GM13977 (cell line): ENCODE measurements at regions of chr13 and their contacts with region 1.

Region 1: DNA sequence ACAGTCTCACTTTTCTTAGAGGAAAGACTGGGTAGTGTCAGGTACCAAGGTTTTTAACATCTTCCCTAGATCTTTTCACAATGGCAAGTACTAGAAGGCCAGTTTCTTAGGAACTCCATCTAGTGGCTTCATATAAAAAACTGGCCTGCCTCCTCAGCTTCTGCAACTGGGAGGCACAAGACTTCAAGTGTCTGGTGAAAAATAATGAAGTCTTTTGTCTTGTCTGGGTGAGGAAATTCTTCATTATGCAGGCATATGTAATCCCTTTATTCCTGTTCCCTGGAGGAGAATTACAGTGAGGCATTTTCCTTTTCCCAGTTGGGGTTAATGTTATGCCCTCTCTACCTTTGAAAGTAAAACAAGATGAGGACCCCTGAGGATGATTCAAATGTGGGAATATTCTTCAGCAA is 300.5 kb downstream of the NALCN start:
- DNase-seq: no peak
- CTCF ChIP-seq: no peak

Region 2: GRCh38 chr13:100588331-100589177 is 527.2 kb before region 1 on chr13 and contains the start of gene GGACT:
- in situ Hi-C with region 1: loop called (anchors 25 kb)
- DNase-seq: peak; percentile 94
- CTCF ChIP-seq: peak; percentile 95

Region 3: GRCh38 chr13:101499406-101499805 is 383.6 kb after region 1 on chr13:
- in situ Hi-C with region 1: no loop called
- DNase-seq: no peak
- CTCF ChIP-seq: no peak

Region 4: DNA sequence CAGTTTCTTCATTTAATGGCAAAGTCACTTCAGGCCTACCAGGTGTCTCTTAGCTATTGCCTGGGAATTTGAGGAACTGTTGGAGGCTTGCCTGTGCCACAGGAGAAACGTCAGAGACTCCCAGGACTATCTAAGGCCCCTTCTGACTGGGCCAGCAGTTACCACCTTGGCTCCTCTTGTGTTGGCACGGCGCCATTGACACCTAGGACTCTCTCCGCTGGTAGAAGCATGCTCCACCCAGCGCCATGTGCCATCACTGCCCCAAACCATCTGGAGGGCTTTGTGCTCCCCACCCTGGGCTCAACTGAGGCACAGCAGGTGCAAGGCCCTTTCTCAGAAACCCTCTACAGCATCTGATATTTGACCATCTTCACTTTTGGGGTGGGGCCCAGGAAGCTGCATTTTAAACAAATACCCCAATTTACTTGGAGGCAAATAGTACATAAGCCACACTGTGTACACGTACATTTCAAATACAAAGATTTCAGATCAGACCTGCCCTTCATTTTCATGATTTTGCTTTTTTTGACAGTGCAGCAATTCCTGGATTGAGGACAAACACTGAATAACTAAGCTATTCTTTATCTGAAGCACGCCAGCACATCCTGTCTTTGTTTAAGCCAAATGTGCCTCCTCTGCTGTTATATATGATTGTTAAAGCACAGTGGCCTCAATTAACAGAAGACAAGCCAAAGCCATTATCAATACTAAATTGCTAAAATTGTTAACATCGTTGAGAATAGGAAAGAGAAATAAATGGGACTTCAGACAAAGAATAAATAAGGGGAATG is 1421.1 kb after region 1 on chr13:
- in situ Hi-C with region 1: no loop called
- DNase-seq: no peak
- CTCF ChIP-seq: no peak